ENCODE measurements at regions of chr1 and their contacts with region 1.

Region 1: GRCh38 chr1:15128520-15129313 is 24.8 kb upstream of the TMEM51 start:
- DNase-seq: peak; percentile 80
- ATAC-seq: peak; percentile 94
- H3K4me3 Mint-ChIP-seq: no peak overlapping the region
- H3K27ac Mint-ChIP-seq: no peak overlapping the region
- H3K4me1 Mint-ChIP-seq: no peaks in the 10 kb centered on the region
- H3K27me3 Mint-ChIP-seq: peaks cover 13% of the 10 kb centered on the region

Region 2: GRCh38 chr1:15116966-15117365 is 11.8 kb before region 1 on chr1:
- CTCF ChIA-PET with region 1: interaction called, 11 read pairs
- POLR2A ChIA-PET with region 1: no interaction called
- DNase-seq: no peak
- ATAC-seq: no peak
- H3K4me3 Mint-ChIP-seq: no peak overlapping the region
- H3K27ac Mint-ChIP-seq: no peak overlapping the region
- H3K4me1 Mint-ChIP-seq: peaks cover 9% of the 10 kb centered on the region
- H3K27me3 Mint-ChIP-seq: peaks cover 3% of the 10 kb centered on the region

Region 3: GRCh38 chr1:15152318-15153183 is 23.8 kb after region 1 on chr1:
- CTCF ChIA-PET with region 1: interaction called, 15 read pairs
- POLR2A ChIA-PET with region 1: interaction called, 6 read pairs
- DNase-seq: peak; percentile 37
- ATAC-seq: no peak
- H3K4me3 Mint-ChIP-seq: peak overlapping the region; percentile 48
- H3K27ac Mint-ChIP-seq: no peak overlapping the region
- H3K4me1 Mint-ChIP-seq: peaks cover 33% of the 10 kb centered on the region
- H3K27me3 Mint-ChIP-seq: peaks cover 57% of the 10 kb centered on the region

Region 4: GRCh38 chr1:15272009-15272788 is 143.5 kb after region 1 on chr1:
- CTCF ChIA-PET with region 1: interaction called, 80 read pairs
- POLR2A ChIA-PET with region 1: no interaction called
- DNase-seq: peak; percentile 66
- ATAC-seq: peak; percentile 82
- H3K4me3 Mint-ChIP-seq: no peak overlapping the region
- H3K27ac Mint-ChIP-seq: no peak overlapping the region
- H3K4me1 Mint-ChIP-seq: peaks cover 6% of the 10 kb centered on the region
- H3K27me3 Mint-ChIP-seq: peaks cover 30% of the 10 kb centered on the region

Region 5: GRCh38 chr1:15279576-15280230 is 151.0 kb after region 1 on chr1:
- CTCF ChIA-PET with region 1: interaction called, 12 read pairs
- POLR2A ChIA-PET with region 1: no interaction called
- DNase-seq: no peak
- ATAC-seq: no peak
- H3K4me3 Mint-ChIP-seq: no peak overlapping the region
- H3K27ac Mint-ChIP-seq: no peak overlapping the region
- H3K4me1 Mint-ChIP-seq: no peaks in the 10 kb centered on the region
- H3K27me3 Mint-ChIP-seq: peaks cover 25% of the 10 kb centered on the region

Region 6: GRCh38 chr1:15299806-15300205 is 171.1 kb after region 1 on chr1:
- CTCF ChIA-PET with region 1: interaction called, 54 read pairs
- POLR2A ChIA-PET with region 1: no interaction called
- DNase-seq: no peak
- ATAC-seq: no peak
- H3K4me3 Mint-ChIP-seq: no peak overlapping the region
- H3K27ac Mint-ChIP-seq: no peak overlapping the region
- H3K4me1 Mint-ChIP-seq: peaks cover 10% of the 10 kb centered on the region
- H3K27me3 Mint-ChIP-seq: peaks cover 5% of the 10 kb centered on the region

Region 7: GRCh38 chr1:15304701-15305467 is 176.2 kb after region 1 on chr1:
- CTCF ChIA-PET with region 1: interaction called, 54 read pairs
- POLR2A ChIA-PET with region 1: no interaction called
- DNase-seq: peak; percentile 77
- ATAC-seq: peak; percentile 73
- H3K4me3 Mint-ChIP-seq: no peak overlapping the region
- H3K27ac Mint-ChIP-seq: no peak overlapping the region
- H3K4me1 Mint-ChIP-seq: no peaks in the 10 kb centered on the region
- H3K27me3 Mint-ChIP-seq: peaks cover 10% of the 10 kb centered on the region

Measured in activated CD8-positive, alpha-beta T cell treated with anti-CD3 and anti-CD28 coated beads, Interleukin-2, amount 10 ng/mL, durations not matched to agents 7 days and 5 days (primary cell).